ENCODE measurements at regions of chr6 and their contacts with region 1.

Region 1: GRCh38 chr6:36442671-36443470 is at the starts of genes KCTD20 and PXT1:
- DNase-seq: peak; percentile 78 to 89 (median 83)
- ATAC-seq: peak; percentile 91
- H3K4me3 ChIP-seq: peak within 1 kb of the TSS; percentile 69
- H3K4me3 Mint-ChIP-seq: peak within 1 kb of the TSS; percentile 85 to 99 (median 96)
- H3K27ac ChIP-seq: peak within 1 kb of the TSS; percentile 97
- H3K27ac Mint-ChIP-seq: peak within 1 kb of the TSS; percentile 92 to 99 (median 97)
- H3K4me1 ChIP-seq: peaks cover 20 to 31% of the 10 kb centered on the region in 2 donors
- H3K4me1 Mint-ChIP-seq: peaks cover 28 to 56% (median 50%) of the 10 kb centered on the region in 7 donors
- H3K27me3 ChIP-seq: no peaks in the 10 kb centered on the region
- H3K27me3 Mint-ChIP-seq: no peaks in the 10 kb centered on the region
- total RNA-seq, gene KCTD20: 33.0 to 55.8 (median 33.2) TPM
- total RNA-seq, gene PXT1: 0.15 to 0.64 (median 0.32) TPM

Region 2: GRCh38 chr6:36423101-36423824 is 19.6 kb before region 1 on chr6:
- CTCF ChIA-PET with region 1: interaction called, 10 read pairs
- POLR2A ChIA-PET with region 1: interaction called, 4 read pairs
- intact Hi-C with region 1: loop called (anchors 1 kb)
- DNase-seq: peak; percentile 94 to 98 (median 97)
- ATAC-seq: peak; percentile 99
- H3K4me3 ChIP-seq: peak overlapping the region; percentile 70
- H3K4me3 Mint-ChIP-seq: peak overlapping the region; percentile 85 to 96 (median 94)
- H3K27ac ChIP-seq: peak overlapping the region; percentile 75
- H3K27ac Mint-ChIP-seq: peak overlapping the region; percentile 84 to 97 (median 93)
- H3K4me1 ChIP-seq: peaks cover 0 to 10% of the 10 kb centered on the region in 2 donors
- H3K4me1 Mint-ChIP-seq: peaks cover 10 to 21% (median 18%) of the 10 kb centered on the region in 7 donors
- H3K27me3 ChIP-seq: no peaks in the 10 kb centered on the region
- H3K27me3 Mint-ChIP-seq: no peaks in the 10 kb centered on the region

Region 3: DNA sequence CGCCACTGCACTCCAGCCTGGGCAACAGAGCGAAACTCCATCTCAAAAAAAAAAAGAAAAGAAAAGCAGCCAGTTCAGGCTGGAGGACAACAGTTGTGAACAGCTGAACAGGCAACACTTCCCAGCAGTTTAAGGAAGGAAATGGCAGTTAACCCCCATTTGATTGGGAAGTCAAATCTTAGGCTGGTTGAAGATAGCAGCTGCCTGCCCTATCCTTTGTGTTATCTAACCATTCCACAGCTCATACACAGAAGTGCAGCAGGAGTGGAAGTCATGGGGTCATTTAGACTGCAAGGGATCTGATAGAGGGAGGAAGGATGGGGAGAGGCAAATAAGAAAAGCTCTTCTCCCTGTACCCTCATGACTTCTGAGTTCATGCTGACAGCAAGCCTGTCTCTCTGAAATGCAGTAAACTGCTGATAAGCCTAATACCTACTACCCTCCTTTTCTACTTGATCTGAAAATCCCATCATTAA is 35.2 kb after region 1 on chr6:
- CTCF ChIA-PET with region 1: interaction called, 3 read pairs
- POLR2A ChIA-PET with region 1: no interaction called
- intact Hi-C with region 1: loop called in 1 of 2 experiments (anchors 5 kb)
- DNase-seq: no peak
- ATAC-seq: no peak
- H3K4me3 ChIP-seq: no peak overlapping the region
- H3K4me3 Mint-ChIP-seq: no peak overlapping the region
- H3K27ac ChIP-seq: no peak overlapping the region
- H3K27ac Mint-ChIP-seq: peak overlapping the region in 8 of 9 donors; percentile 18 to 76 (median 44)
- H3K4me1 ChIP-seq: no peaks in the 10 kb centered on the region
- H3K4me1 Mint-ChIP-seq: peaks cover 10 to 33% (median 23%) of the 10 kb centered on the region in 7 donors
- H3K27me3 ChIP-seq: no peaks in the 10 kb centered on the region
- H3K27me3 Mint-ChIP-seq: no peaks in the 10 kb centered on the region

Region 4: DNA sequence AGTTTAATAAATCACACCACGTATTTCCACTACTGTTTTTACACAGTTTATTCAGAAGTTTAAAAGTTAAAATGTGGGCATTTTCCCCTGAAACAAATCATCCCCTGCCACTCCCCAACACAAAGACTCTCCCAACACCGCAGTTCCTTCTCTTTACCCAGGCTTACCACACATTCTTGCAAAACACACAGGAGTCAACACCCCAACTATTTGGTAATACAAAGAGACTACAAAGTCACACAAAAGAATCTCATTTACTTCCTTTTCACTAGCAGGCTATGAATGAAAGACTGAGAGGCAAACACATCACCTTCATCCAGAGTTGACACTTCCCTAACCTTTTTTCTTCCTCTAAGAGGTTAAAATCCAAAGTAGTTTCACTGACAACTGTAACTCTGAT is 51.0 kb after region 1 on chr6:
- CTCF ChIA-PET with region 1: no interaction called
- POLR2A ChIA-PET with region 1: no interaction called
- intact Hi-C with region 1: loop called in 1 of 2 experiments (anchors 5 kb)
- DNase-seq: no peak
- ATAC-seq: peak; percentile 65
- H3K4me3 ChIP-seq: no peak overlapping the region
- H3K4me3 Mint-ChIP-seq: peak overlapping the region in 4 of 10 donors; percentile 4 to 16 (median 10)
- H3K27ac ChIP-seq: peak overlapping the region; percentile 24
- H3K27ac Mint-ChIP-seq: peak overlapping the region; percentile 26 to 90 (median 73)
- H3K4me1 ChIP-seq: peaks cover 0 to 4% of the 10 kb centered on the region in 2 donors
- H3K4me1 Mint-ChIP-seq: peaks cover 16 to 50% (median 40%) of the 10 kb centered on the region in 7 donors
- H3K27me3 ChIP-seq: no peaks in the 10 kb centered on the region
- H3K27me3 Mint-ChIP-seq: no peaks in the 10 kb centered on the region

Region 5: GRCh38 chr6:36576561-36576960 is 133.7 kb after region 1 on chr6:
- CTCF ChIA-PET with region 1: no interaction called
- POLR2A ChIA-PET with region 1: interaction called, 5 read pairs
- intact Hi-C with region 1: loop called in 1 of 2 experiments (anchors 1 kb)
- DNase-seq: no peak
- ATAC-seq: no peak
- H3K4me3 ChIP-seq: no peak overlapping the region
- H3K4me3 Mint-ChIP-seq: no peak overlapping the region
- H3K27ac ChIP-seq: no peak overlapping the region
- H3K27ac Mint-ChIP-seq: no peak overlapping the region
- H3K4me1 ChIP-seq: no peaks in the 10 kb centered on the region
- H3K4me1 Mint-ChIP-seq: peaks cover 0 to 16% (median 14%) of the 10 kb centered on the region in 7 donors
- H3K27me3 ChIP-seq: no peaks in the 10 kb centered on the region
- H3K27me3 Mint-ChIP-seq: no peaks in the 10 kb centered on the region

Region 6: GRCh38 chr6:36599791-36600209 is 156.9 kb after region 1 on chr6:
- CTCF ChIA-PET with region 1: no interaction called
- POLR2A ChIA-PET with region 1: interaction called, 18 read pairs
- intact Hi-C with region 1: loop called (anchors 1 kb)
- DNase-seq: peak in 7 of 9 donors; percentile 25 to 55 (median 45)
- ATAC-seq: peak; percentile 55
- H3K4me3 ChIP-seq: peak overlapping the region; percentile 58
- H3K4me3 Mint-ChIP-seq: peak overlapping the region; percentile 83 to 98 (median 93)
- H3K27ac ChIP-seq: peak overlapping the region; percentile 73
- H3K27ac Mint-ChIP-seq: peak overlapping the region; percentile 64 to 100 (median 91)
- H3K4me1 ChIP-seq: peaks cover 63 to 81% of the 10 kb centered on the region in 2 donors
- H3K4me1 Mint-ChIP-seq: peaks cover 45 to 84% (median 71%) of the 10 kb centered on the region in 7 donors
- H3K27me3 ChIP-seq: no peaks in the 10 kb centered on the region
- H3K27me3 Mint-ChIP-seq: no peaks in the 10 kb centered on the region

Region 7: GRCh38 chr6:37110500-37111461 is 667.9 kb after region 1 on chr6:
- CTCF ChIA-PET with region 1: no interaction called
- POLR2A ChIA-PET with region 1: no interaction called
- intact Hi-C with region 1: no loop called
- DNase-seq: peak in 1 of 9 donors; percentile 25
- ATAC-seq: no peak
- H3K4me3 ChIP-seq: no peak overlapping the region
- H3K4me3 Mint-ChIP-seq: no peak overlapping the region
- H3K27ac ChIP-seq: no peak overlapping the region
- H3K27ac Mint-ChIP-seq: peak overlapping the region in 1 of 9 donors; percentile 46
- H3K4me1 ChIP-seq: peaks cover 0 to 3% of the 10 kb centered on the region in 2 donors
- H3K4me1 Mint-ChIP-seq: peaks cover 0 to 23% (median 5%) of the 10 kb centered on the region in 7 donors
- H3K27me3 ChIP-seq: no peaks in the 10 kb centered on the region
- H3K27me3 Mint-ChIP-seq: peaks cover 0 to 7% (median 0%) of the 10 kb centered on the region in 5 donors

Measured in naive thymus-derived CD4-positive, alpha-beta T cell (primary cell).